ENCODE measurements at regions of chr14 and their contacts with region 1.

Region 1: GRCh38 chr14:38197001-38197783 is 10.5 kb upstream of the SSTR1 start:
- DNase-seq: peak in 1 of 2 donors; percentile 34
- ATAC-seq: peak in 2 of 3 donors; percentile 53 to 58
- H3K4me3 ChIP-seq: no peak overlapping the region
- H3K4me3 Mint-ChIP-seq: no peak overlapping the region
- H3K27ac ChIP-seq: no peak overlapping the region
- H3K27ac Mint-ChIP-seq: no peak overlapping the region
- H3K4me1 ChIP-seq: no peaks in the 10 kb centered on the region
- H3K4me1 Mint-ChIP-seq: peaks cover 0 to 5% of the 10 kb centered on the region in 2 donors
- H3K27me3 ChIP-seq: no peaks in the 10 kb centered on the region
- H3K27me3 Mint-ChIP-seq: peaks cover 7 to 15% of the 10 kb centered on the region in 2 donors
- CTCF ChIP-seq: peak; percentile 74

Region 2: DNA sequence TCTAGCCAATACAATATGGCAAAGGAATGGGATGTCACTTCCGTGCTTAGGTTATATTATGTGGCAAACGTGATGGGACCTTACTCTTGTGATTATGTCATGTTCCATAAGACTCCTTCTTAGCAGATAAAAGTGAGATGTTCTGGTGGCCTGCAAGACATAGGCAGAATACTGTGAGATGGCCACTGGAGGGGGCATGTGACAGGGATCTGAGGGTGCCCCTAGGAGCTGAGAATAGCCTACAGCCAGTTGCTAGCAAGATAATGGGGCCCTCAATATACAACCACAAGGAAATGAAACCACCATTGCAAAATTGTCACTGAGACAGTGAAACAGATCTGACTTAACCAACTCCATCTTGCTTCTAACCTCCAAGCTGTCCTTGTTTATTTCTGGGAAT is 140.9 kb before region 1 on chr14:
- intact Hi-C with region 1: loop called (anchors 1 kb)
- DNase-seq: peak; percentile 23 to 47
- ATAC-seq: peak; percentile 74 to 98 (median 97)
- H3K4me3 ChIP-seq: no peak overlapping the region
- H3K4me3 Mint-ChIP-seq: no peak overlapping the region
- H3K27ac ChIP-seq: no peak overlapping the region
- H3K27ac Mint-ChIP-seq: no peak overlapping the region
- H3K4me1 ChIP-seq: no peaks in the 10 kb centered on the region
- H3K4me1 Mint-ChIP-seq: peaks cover 0 to 5% of the 10 kb centered on the region in 2 donors
- H3K27me3 ChIP-seq: no peaks in the 10 kb centered on the region
- H3K27me3 Mint-ChIP-seq: no peaks in the 10 kb centered on the region
- CTCF ChIP-seq: peak; percentile 24